Calu3 (cell line): ENCODE measurements at regions of chr22 and their contacts with region 1.

Region 1: DNA sequence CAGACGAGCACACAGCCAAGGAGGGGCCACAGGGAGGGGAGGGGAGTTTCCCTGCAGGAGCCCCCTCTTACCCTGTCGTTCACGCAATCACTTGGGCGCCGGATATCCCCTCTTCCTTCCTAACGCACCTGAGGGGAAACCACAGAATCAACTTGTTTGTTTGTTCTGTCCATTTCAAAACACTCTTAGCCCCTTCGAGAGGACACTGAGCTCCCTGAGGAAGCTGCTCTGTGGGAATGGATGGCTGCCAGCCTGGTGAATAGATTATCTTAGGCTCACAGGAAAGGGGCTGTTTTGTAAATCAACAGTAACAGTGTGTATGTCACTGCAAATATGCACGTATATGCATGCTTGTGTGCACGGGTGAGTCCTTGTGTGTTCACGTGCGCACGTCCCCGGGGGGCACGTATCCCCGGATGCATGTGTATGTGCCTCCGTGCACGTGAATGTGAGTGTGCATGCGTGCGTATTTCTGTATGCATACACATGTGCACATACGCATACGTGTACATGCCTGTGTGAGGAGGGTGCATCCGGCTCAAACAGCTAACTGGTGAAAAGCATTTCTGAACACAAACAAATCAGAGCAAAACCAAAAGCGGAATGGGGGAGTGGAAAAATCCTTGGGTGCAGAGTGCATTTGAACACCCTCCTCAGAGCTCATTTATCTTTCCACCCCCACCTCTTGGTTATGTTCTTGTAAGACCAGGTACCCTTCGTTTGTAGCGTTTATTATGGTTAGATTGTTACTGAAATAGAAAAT is 7.2 kb downstream of the ARSA start:
- DNase-seq: peak; percentile 24
- H3K4me3 Mint-ChIP-seq: peak overlapping the region; percentile 59
- H3K27ac Mint-ChIP-seq: peak overlapping the region; percentile 87
- H3K4me1 Mint-ChIP-seq: peaks cover 34% of the 10 kb centered on the region
- H3K27me3 Mint-ChIP-seq: peaks cover 9% of the 10 kb centered on the region
- CTCF ChIP-seq: no peak

Region 2: DNA sequence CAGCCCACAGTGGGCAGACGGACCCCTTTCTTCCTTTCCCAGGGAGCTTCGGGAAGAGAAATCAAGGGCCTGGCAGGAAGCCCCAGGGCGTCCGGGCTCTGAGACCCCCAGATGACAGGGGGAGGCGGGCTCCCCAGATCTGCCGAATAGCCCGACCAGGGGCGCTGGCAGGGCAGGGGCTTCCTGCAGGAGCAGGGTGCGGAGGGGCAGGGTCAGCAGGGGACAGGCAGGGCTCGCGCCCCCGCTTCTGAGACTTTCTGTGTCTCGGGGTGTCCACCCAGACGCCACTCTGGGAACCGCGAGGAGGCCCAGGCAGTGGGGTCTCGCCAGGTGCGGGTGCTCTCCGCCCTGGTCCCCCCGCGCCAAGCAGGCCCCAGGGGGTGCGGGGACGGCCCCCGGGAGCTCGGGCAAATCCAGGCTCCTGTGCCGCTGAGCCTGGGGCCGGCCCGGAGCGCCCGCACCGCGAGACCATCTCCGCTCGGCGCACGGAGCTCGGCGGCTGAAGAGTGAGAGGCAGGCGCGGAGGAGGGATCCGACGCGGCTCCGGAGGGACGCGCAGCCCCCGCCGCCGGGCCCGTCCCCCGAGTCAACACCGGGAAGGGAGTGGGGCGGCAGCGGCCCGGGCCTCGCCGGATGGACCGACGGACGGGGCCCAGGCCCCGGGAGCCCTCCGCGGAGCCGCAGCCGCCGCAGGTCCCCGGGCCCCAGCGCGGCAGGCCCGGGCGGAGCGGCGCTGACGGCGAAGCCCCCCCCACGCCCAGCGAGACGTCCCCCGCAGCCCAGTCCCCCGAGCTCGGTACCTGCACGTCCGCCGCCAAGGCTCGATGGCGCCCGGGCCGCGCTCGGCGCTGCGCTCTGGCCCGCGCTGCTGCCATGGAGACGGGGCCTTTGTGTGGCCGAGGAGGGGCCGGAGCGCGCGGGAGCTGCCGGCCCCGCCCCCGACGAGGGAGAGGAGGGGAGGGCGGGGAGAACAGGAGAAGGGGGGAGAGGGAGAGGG is 313.7 kb before region 1 on chr22 and contains the start of gene PLXNB2:
- CTCF ChIA-PET with region 1: no interaction called
- intact Hi-C with region 1: no loop called
- DNase-seq: peak; percentile 86
- H3K4me3 Mint-ChIP-seq: peak within 1 kb of the TSS; percentile 67
- H3K27ac Mint-ChIP-seq: peak within 1 kb of the TSS; percentile 84
- H3K4me1 Mint-ChIP-seq: peaks cover 39% of the 10 kb centered on the region
- H3K27me3 Mint-ChIP-seq: no peaks in the 10 kb centered on the region
- CTCF ChIP-seq: no peak
- total RNA-seq, gene PLXNB2: 298 and 337 TPM in 2 replicates

Region 3: GRCh38 chr22:50507991-50508884 is 112.5 kb before region 1 on chr22 and contains the start of gene NCAPH2:
- CTCF ChIA-PET with region 1: interaction called, 13 read pairs
- intact Hi-C with region 1: no loop called
- DNase-seq: peak; percentile 96
- H3K4me3 Mint-ChIP-seq: peak within 1 kb of the TSS; percentile 91
- H3K27ac Mint-ChIP-seq: peak within 1 kb of the TSS; percentile 91
- H3K4me1 Mint-ChIP-seq: peaks cover 17% of the 10 kb centered on the region
- H3K27me3 Mint-ChIP-seq: no peaks in the 10 kb centered on the region
- CTCF ChIP-seq: no peak
- total RNA-seq, gene NCAPH2: 73.2 and 92.0 TPM in 2 replicates

Region 4: DNA sequence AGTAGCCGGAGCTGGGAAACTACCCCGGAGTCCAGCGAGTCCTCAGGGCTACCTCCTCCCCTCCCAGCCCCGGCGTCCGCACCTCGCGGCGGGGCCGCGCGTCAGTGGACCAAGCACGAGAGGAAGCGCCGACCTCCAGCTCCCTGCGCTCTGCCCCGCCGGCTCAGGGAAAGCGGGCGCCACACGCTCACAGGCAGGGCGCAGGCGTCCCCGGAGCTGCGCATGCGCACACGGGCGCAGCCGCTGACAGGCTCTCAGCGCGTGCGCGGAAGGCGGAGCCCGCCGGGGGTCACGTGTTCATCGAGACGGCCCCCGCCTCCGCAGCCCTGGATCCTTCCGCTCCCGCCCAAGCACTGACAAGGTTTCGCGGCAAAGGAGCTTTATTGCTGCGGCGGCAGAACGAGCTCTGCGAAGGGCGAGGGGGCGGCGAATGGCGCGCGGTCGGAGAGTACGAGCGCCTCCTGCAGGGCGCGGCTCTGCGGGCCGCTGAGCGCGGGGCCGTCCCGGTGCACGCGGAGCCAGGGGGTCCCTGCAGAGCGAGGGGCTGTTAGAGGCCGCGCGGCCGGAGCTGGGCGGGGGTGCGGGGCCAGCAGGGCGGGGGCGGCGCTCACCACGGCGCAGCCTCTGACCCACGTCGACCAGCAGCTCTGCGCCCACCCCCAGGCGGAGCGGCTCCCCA is 95.2 kb before region 1 on chr22 and contains the start of gene SCO2:
- CTCF ChIA-PET with region 1: interaction called, 30 read pairs
- intact Hi-C with region 1: loop called (anchors 2 kb)
- DNase-seq: peak; percentile 98
- H3K4me3 Mint-ChIP-seq: peak within 1 kb of the TSS; percentile 85
- H3K27ac Mint-ChIP-seq: peak within 1 kb of the TSS; percentile 92
- H3K4me1 Mint-ChIP-seq: peaks cover 20% of the 10 kb centered on the region
- H3K27me3 Mint-ChIP-seq: no peaks in the 10 kb centered on the region
- CTCF ChIP-seq: peak; percentile 55
- total RNA-seq, gene SCO2: 3.6 and 5.3 TPM in 2 replicates

Region 5: DNA sequence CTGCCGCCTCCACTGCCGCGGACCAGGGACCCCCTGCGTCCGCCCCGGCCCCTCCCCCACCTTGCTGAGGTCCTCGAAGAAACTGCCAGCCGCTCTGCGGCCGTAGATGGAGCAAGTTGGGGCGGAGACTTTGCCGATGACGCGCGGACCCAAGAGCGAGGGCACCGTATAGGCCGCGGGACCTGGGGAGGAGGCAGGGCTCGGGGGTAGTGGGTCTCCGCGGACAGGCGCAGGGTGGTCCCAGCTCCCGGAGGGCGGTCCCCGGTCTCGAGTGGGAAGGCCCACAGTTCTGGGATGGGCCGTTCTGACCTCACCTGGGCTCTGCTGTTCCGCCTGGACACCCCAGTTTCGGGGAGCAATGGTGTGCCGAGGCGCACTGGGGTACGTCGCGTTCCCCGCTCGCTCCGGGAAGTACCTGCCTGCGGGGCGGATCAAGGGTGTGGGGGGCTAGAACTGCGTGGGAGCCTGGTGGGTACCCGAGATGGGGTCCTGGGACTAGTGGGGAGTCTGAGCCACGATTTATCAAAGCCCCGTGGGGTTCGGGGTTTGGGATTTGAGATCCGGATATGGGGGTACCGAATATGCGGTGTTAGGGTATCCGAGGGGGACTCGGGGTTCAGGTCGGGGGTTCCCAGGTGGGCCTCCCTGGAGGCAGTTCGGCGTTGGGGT is 89.8 kb before region 1 on chr22:
- CTCF ChIA-PET with region 1: interaction called, 30 read pairs
- intact Hi-C with region 1: loop called (anchors 2 kb)
- DNase-seq: peak; percentile 85
- H3K4me3 Mint-ChIP-seq: peak overlapping the region; percentile 90
- H3K27ac Mint-ChIP-seq: peak overlapping the region; percentile 98
- H3K4me1 Mint-ChIP-seq: peaks cover 34% of the 10 kb centered on the region
- H3K27me3 Mint-ChIP-seq: no peaks in the 10 kb centered on the region
- CTCF ChIP-seq: no peak

Region 6: GRCh38 chr22:50562523-50563412 is 58.0 kb before region 1 on chr22 and contains the start of gene SYCE3:
- CTCF ChIA-PET with region 1: interaction called, 12 read pairs
- intact Hi-C with region 1: no loop called
- DNase-seq: peak; percentile 99
- H3K4me3 Mint-ChIP-seq: peak within 1 kb of the TSS; percentile 92
- H3K27ac Mint-ChIP-seq: peak within 1 kb of the TSS; percentile 80
- H3K4me1 Mint-ChIP-seq: peaks cover 9% of the 10 kb centered on the region
- H3K27me3 Mint-ChIP-seq: no peaks in the 10 kb centered on the region
- CTCF ChIP-seq: peak; percentile 95
- total RNA-seq, gene SYCE3: not detected in 2 replicates

Region 7: DNA sequence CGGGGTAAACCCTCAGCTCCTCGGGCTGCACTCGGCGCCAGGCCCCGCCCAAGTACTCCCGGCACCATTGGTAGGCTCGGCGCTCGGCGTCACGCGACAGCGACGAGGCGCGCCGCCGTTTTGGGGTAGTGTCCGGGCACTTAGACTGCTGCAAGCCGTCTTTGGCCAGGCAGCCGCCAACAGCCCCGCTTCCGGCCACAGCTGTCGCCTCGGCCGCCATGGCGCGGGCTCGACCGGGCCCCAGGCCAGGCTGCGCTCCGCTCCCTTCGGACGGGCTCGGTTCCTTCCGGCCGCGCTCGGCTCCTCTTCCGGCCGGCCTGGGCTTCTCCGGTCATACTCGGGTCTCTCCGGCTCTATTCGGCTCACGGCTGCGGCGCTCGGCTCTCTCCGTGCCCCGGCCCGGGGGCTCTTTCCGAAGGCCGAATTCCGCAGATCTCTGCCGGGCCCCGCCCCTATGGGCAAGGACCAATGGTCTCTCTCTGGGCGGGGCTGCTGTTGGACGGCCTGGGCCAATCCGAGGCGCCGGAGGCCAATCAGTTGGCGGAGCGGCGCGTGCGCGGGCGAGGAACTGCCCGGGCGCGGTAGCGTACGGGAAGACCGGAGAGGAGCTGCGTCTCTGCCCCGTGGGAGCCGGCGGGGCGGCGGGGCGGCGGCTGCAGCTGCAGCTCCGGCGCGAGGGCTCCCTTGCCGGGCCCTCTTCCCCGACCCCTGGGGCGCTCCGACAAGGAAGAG is 38.0 kb before region 1 on chr22 and contains the start of gene CHKB:
- CTCF ChIA-PET with region 1: no interaction called
- intact Hi-C with region 1: loop called (anchors 5 kb)
- DNase-seq: peak; percentile 99
- H3K4me3 Mint-ChIP-seq: peak within 1 kb of the TSS; percentile 97
- H3K27ac Mint-ChIP-seq: peak within 1 kb of the TSS; percentile 90
- H3K4me1 Mint-ChIP-seq: no peaks in the 10 kb centered on the region
- H3K27me3 Mint-ChIP-seq: no peaks in the 10 kb centered on the region
- CTCF ChIP-seq: no peak
- total RNA-seq, gene CHKB: 80.9 and 83.2 TPM in 2 replicates

Region 8: DNA sequence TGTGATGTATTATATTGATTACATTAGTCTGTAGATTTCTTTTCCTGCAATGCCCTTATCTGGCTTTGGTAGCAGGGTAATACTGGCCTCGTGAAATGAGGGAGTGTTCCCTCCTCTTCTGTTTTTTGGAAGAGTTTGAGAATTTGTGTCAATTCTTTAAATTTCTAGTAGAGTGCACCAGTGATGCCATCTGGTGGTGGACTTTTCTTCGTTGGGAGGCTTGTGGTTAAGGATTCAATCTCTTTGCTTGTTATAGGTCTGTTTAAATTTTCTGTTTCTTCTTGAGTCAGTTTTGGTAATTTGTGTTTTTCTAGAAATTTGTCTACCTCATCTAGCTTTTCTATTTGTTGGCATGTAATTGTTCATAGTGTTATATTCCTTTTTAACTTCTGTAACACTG is 70.7 kb after region 1 on chr22:
- CTCF ChIA-PET with region 1: no interaction called
- intact Hi-C with region 1: loop called (anchors 5 kb)
- DNase-seq: peak; percentile 47
- H3K4me3 Mint-ChIP-seq: no peak overlapping the region
- H3K27ac Mint-ChIP-seq: no peak overlapping the region
- H3K4me1 Mint-ChIP-seq: no peaks in the 10 kb centered on the region
- H3K27me3 Mint-ChIP-seq: peaks cover 65% of the 10 kb centered on the region
- CTCF ChIP-seq: peak; percentile 44